ENCODE measurements at regions of chr7 and their contacts with region 1.

Region 1: DNA sequence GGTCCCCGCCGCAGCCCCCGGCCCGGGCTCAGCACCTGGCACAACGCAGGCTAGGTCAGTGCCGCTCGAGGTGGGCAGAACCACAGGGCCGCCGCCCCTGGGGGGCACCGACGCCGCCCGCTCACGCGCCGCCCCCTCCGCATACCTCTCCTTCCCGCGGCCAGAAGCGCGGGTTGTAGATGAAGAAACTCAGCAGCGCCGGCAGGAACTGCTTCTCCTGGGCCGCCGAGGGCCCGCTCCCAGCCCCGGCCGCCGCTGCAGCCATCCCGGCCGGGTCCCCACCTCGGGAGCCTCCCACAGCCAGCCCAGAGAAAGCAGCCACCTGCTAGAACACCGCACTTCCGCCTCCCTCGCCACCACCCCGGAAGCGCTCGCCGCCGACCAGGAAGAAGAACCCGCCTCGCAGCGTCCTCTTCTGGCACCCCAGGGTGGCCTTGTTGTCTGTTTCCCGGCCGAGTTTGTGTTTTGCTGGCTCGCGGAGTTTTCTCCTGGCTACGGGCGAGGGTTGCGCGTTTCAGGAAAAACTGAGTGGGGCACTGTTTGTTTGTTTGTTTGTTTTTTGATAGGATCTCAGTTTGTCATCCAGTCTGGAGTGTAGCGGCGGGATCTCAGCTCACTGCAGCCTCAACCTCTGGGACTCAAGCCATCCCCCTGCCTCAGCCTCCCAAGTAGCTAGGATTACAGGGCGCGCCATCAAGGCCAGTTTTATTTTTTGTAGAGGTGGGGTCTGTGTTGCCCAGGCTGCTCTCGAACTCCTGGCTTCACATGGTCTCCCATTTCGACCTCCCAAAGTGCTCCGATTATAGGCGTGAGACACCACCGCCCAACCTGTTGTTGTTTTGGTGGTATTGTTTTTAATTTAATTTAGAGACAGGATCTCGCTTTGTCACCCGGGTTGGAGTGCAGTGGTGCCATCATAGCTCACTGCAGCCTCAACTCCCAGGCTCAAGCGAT is 17.7 kb downstream of the OCM2 start:
- DNase-seq: peak; percentile 91
- H3K4me3 Mint-ChIP-seq: peak overlapping the region; percentile 96
- H3K27ac Mint-ChIP-seq: peak overlapping the region; percentile 94
- H3K4me1 Mint-ChIP-seq: peaks cover 26% of the 10 kb centered on the region
- H3K27me3 Mint-ChIP-seq: no peaks in the 10 kb centered on the region

Region 2: DNA sequence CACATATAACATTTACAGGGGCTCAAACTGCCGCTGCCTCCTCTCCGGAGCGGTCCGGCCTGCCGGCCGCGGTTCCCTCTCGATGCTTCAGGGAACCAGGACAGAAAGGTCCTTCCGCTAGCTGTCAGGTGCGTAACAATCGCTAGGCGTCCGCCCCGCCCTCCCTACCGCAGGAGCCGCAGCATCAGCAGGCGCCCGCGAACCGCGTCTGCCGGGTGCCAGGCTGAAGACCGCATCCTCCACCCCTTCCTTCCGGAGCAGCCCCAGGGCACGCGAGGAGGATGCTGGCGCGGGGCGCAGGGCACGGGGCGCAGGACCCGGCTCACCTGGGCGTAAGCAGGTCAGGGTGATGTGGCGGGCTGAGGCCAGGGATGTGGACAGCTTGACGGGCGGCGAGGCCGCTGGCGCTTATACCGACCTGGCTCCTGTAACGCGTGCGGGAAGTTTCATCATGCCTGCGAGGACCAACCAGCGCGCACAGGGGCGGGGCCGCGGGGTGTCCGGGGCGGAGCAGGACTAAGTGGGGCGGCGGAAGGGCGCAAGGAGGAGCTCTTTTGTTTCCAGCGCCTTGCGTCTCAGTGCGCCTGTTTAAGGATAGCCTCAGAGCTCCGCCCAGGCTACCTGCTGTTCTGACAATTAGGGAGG is 100.1 kb before region 1 on chr7 and contains the start of gene ASNS:
- CTCF ChIA-PET with region 1: no interaction called
- POLR2A ChIA-PET with region 1: interaction called, 3 read pairs
- intact Hi-C with region 1: loop called (anchors 1 kb)
- DNase-seq: peak; percentile 96
- H3K4me3 Mint-ChIP-seq: peak within 1 kb of the TSS; percentile 86
- H3K27ac Mint-ChIP-seq: peak within 1 kb of the TSS; percentile 91
- H3K4me1 Mint-ChIP-seq: peaks cover 19% of the 10 kb centered on the region
- H3K27me3 Mint-ChIP-seq: no peaks in the 10 kb centered on the region
- total RNA-seq, gene ASNS: 200 to 214 TPM

Region 3: GRCh38 chr7:97959046-97959445 is 13.2 kb before region 1 on chr7:
- CTCF ChIA-PET with region 1: no interaction called
- POLR2A ChIA-PET with region 1: no interaction called
- intact Hi-C with region 1: no loop called
- DNase-seq: no peak
- H3K4me3 Mint-ChIP-seq: no peak overlapping the region
- H3K27ac Mint-ChIP-seq: no peak overlapping the region
- H3K4me1 Mint-ChIP-seq: no peaks in the 10 kb centered on the region
- H3K27me3 Mint-ChIP-seq: no peaks in the 10 kb centered on the region

Measured in activated CD4-positive, alpha-beta memory T cell treated with anti-CD3 and anti-CD28 coated beads for 36 hours (primary cell).